ENCODE measurements at regions of chr16 and their contacts with region 1.

Region 1: GRCh38 chr16:66728117-66728787 is 23.2 kb downstream of the DYNC1LI2 start:
- DNase-seq: peak; percentile 71
- H3K4me3 ChIP-seq: no peak overlapping the region
- H3K27ac ChIP-seq: no peak overlapping the region
- H3K4me1 ChIP-seq: peaks cover 4% of the 10 kb centered on the region
- H3K27me3 ChIP-seq: no peaks in the 10 kb centered on the region
- CTCF ChIP-seq: peak; percentile 51 to 69 (median 67)
- POLR2A ChIP-seq: no peak

Region 2: DNA sequence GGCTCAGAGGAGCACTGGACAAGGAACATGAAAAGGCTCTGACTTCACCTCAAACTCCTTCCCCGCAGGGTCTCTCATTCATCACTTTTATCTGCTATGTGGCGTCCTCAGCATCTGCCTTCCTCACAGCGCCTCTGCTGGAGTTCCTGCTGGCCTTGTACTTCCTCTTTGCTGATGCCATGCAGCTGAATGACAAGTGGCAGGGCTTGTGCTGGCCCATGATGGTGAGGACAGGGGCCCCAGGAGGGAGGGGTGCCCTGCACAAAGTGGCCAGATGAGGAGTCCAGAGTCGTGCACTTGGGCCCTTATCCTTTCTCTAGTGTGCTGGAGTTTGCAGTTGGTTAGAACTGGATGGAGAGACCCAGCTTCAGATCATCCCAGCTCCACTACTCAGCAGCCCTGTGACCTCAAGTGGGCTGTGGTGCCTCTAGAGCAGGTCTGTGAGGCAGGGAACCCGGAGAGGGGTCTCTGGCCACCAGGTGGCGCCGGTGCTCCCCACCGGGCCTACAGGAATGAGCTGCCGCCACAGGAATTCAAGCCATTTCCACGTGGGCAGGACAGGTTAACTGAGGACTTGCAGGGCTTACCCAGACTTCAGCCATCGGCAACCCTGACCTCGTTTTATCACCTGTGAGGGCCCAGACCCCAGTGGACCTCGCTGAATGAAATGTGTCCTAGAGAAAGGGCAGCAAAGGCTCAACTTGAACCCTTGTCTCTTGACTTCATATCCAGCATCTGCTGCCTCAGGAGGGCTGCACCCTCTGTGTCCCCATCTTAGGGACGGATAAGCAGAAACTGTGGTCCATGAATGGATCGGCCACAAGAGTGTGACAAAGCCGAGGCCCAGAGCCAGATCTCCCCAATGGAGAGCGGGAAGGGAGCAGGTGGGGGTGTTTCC is 119.8 kb before region 1 on chr16:
- intact Hi-C with region 1: no loop called
- DNase-seq: peak; percentile 94
- H3K4me3 ChIP-seq: no peak overlapping the region
- H3K27ac ChIP-seq: peak overlapping the region; percentile 29 to 60
- H3K4me1 ChIP-seq: peaks cover 25% of the 10 kb centered on the region
- H3K27me3 ChIP-seq: no peaks in the 10 kb centered on the region
- CTCF ChIP-seq: peak; percentile 75 to 92 (median 84)
- POLR2A ChIP-seq: no peak

Region 3: DNA sequence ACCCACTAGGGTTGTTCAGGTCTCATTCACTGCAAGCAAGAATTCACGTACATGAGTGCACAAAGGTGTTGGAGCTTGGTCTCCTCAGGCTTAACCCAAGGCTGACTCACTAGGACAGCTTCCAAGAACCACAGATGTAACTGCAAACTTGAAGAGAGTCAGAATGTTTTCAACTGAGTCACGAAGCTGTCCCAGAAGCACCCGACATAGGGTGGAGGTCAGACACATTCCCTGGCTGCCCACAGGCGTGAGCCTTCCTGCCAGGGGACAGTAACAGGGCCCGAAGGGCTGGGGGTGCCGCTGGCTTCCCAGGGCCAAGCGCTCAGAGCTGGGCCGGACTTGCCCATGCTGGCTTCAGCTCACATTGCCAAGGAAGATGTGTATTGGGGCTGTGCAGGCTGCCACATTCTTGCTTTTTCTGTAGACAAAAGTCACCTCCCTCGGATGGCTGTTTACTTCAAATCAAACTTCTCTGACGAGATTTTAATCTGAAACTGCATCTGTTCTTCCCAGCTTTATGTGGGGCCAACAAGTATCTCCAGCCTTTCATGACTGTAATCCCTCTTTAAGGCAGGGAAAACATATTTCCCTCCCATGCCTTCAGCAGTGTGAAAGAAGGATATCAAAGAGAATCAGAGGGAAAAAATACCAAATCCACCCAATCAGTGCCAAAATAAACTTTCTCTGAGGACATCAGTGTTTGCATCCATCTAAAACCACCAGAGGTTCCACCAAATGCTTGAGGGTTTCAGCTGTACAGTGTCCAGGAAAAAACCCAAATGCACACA is 109.5 kb before region 1 on chr16:
- intact Hi-C with region 1: no loop called
- DNase-seq: no peak
- H3K4me3 ChIP-seq: no peak overlapping the region
- H3K27ac ChIP-seq: no peak overlapping the region
- H3K4me1 ChIP-seq: peaks cover 18% of the 10 kb centered on the region
- H3K27me3 ChIP-seq: no peaks in the 10 kb centered on the region
- CTCF ChIP-seq: no peak
- POLR2A ChIP-seq: no peak

Region 4: DNA sequence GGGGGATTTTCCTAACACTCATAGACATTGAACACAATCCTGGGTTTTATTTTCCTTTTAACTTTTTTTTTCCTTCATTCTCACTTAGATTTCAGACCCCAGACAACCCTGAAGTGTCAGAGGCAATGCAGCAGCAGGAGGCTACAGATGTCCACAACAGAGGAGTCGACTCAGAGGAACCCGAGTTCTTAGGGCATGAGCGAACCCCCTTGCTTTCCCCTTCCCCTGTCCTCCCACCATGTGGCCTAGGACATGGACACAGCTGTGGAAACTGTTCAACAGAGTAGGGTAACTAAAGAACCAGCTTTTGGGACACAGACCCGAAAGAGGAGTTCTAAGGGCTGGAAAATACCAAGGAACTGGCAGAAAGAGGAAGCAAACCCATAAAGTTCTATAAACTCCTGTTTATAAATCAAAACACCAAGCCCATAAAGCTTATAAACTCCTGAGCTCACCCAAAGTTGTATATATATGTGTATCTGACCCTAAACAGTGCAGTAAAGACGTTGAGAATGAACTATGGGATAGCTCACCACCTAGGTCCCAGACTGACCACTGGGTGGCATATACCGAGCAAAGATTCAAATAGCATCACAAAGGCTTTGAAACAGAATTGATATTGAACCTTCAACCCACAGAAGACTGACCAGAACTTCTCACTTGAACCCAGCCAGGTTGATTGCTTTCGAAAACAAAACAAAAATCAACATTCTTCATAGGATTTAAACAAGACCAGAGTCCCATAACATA is 65.6 kb before region 1 on chr16:
- intact Hi-C with region 1: no loop called
- DNase-seq: peak; percentile 54
- H3K4me3 ChIP-seq: no peak overlapping the region
- H3K27ac ChIP-seq: peak overlapping the region; percentile 29 to 39
- H3K4me1 ChIP-seq: peaks cover 30% of the 10 kb centered on the region
- H3K27me3 ChIP-seq: no peaks in the 10 kb centered on the region
- CTCF ChIP-seq: peak; percentile 13 to 35 (median 33)
- POLR2A ChIP-seq: no peak

Region 5: GRCh38 chr16:66682271-66682670 is 46.0 kb before region 1 on chr16:
- intact Hi-C with region 1: no loop called
- DNase-seq: no peak
- H3K4me3 ChIP-seq: no peak overlapping the region
- H3K27ac ChIP-seq: no peak overlapping the region
- H3K4me1 ChIP-seq: peaks cover 4% of the 10 kb centered on the region
- H3K27me3 ChIP-seq: no peaks in the 10 kb centered on the region
- CTCF ChIP-seq: no peak
- POLR2A ChIP-seq: no peak

Region 6: GRCh38 chr16:66859397-66860068 is 131.3 kb after region 1 on chr16:
- intact Hi-C with region 1: loop called (anchors 10 kb)
- DNase-seq: no peak
- H3K4me3 ChIP-seq: no peak overlapping the region
- H3K27ac ChIP-seq: no peak overlapping the region
- H3K4me1 ChIP-seq: peaks cover 6% of the 10 kb centered on the region
- H3K27me3 ChIP-seq: no peaks in the 10 kb centered on the region
- CTCF ChIP-seq: no peak
- POLR2A ChIP-seq: no peak